CD8-positive, alpha-beta T cell (primary cell): ENCODE measurements at regions of chr10 and their contacts with region 1.

Region 1: DNA sequence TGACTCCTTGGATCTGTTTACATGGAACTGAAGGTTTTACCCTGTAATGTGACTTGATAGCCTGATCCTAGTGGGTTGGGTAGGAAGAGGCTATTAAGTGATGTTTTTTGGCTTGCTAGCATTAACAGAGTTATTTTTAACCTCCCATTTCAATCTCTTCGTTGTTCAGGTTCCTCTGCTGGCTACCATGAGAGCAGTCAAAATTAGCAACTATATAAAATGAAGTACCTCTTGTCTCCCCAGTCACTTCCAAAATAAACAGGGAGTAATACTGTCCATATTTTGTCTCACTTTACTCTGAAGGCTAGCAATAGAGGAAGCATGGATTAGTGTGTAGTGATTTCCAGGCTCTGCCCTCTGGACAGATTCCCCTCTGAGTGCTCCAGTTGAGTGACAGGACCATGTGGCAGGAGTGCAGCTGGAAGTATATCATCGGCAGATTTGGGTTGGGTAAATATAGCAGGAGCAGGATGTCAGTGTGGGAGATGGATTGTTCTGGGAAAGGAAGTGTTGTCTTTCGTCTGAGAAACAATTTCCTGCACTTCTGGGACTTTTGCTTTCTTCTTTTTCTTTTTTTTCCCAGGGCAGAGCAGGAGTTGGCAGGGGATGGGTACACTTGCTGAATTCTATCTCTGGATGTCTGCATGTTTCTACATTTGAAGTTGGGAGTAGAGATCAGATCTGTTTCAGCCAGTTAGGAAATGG is 35.2 kb downstream of the GBF1 start:
- DNase-seq: no peak
- ATAC-seq: no peak
- H3K4me3 ChIP-seq: no peak overlapping the region
- H3K4me3 Mint-ChIP-seq: peak overlapping the region; percentile 2
- H3K27ac ChIP-seq: no peak overlapping the region
- H3K27ac Mint-ChIP-seq: peak overlapping the region; percentile 56
- H3K4me1 ChIP-seq: peaks cover 23% of the 10 kb centered on the region
- H3K4me1 Mint-ChIP-seq: peaks cover 54% of the 10 kb centered on the region
- H3K27me3 ChIP-seq: no peaks in the 10 kb centered on the region
- H3K27me3 Mint-ChIP-seq: no peaks in the 10 kb centered on the region
- CTCF ChIP-seq: no peak

Region 2: DNA sequence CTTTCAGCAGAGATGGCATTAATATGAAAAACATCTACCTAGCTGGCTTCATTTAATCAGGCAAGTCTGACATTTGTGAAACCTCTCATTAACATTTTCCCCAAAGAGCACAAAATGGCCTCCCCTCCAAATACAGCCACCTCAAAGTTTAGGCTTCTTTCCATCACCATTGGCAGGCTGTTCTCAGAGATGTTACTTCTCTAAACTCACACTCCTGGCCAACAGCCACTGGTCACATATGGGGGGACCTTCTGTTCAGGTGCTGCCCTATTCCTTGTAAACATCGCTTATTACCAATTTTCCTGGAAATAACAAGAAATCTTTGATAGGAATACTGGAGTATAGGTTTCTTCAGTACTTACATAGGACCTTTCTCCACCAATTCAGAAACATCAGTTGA is 34.3 kb after region 1 on chr10:
- CTCF ChIA-PET with region 1: no interaction called
- POLR2A ChIA-PET with region 1: no interaction called
- intact Hi-C with region 1: loop called in 1 of 2 experiments (anchors 5 kb)
- DNase-seq: no peak
- ATAC-seq: no peak
- H3K4me3 ChIP-seq: no peak overlapping the region
- H3K4me3 Mint-ChIP-seq: no peak overlapping the region
- H3K27ac ChIP-seq: no peak overlapping the region
- H3K27ac Mint-ChIP-seq: no peak overlapping the region
- H3K4me1 ChIP-seq: no peaks in the 10 kb centered on the region
- H3K4me1 Mint-ChIP-seq: peaks cover 29% of the 10 kb centered on the region
- H3K27me3 ChIP-seq: no peaks in the 10 kb centered on the region
- H3K27me3 Mint-ChIP-seq: no peaks in the 10 kb centered on the region
- CTCF ChIP-seq: no peak

Region 3: DNA sequence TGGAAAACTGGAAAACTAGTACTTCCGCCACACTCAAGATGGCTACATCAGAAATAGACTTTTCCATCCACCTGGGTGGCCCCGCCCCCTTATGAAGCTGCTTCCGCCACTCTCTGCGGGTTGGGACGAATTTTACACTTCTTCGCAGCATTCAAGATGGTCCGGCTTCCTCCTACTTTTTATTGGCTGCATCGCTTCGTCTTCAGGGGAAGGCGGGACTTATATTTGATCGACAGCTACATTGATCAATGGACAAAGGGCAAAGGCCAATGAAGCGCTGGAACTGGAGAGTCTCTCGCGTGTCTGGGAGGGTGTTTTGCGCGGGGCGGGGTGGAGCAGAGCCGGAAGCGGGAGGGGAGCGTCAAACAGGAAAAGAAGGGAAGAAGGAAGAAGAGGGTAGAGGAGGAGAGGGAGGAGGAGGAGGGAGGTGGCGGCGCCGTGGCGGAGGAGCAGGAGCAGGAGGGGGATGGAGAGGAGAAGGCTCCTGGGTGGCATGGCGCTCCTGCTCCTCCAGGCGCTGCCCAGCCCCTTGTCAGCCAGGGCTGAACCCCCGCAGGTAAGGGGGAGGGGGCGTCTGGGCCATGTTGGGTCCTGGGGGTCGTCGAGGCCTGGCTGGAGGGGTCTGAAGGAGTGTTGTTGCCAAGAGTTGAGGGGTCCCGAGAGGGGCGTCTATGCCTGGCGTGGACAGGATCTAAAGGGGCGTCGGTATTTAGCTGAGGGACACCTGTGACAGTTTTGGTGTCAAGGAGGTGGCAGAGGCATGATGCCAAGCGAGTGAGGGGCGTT is 463.2 kb after region 1 on chr10 and contains the start of gene WBP1L:
- CTCF ChIA-PET with region 1: no interaction called
- POLR2A ChIA-PET with region 1: no interaction called
- intact Hi-C with region 1: no loop called
- DNase-seq: peak; percentile 90 to 99 (median 95)
- ATAC-seq: peak; percentile 96
- H3K4me3 ChIP-seq: peak within 1 kb of the TSS; percentile 87 to 99
- H3K4me3 Mint-ChIP-seq: peak within 1 kb of the TSS; percentile 92
- H3K27ac ChIP-seq: peak within 1 kb of the TSS; percentile 64 to 91
- H3K27ac Mint-ChIP-seq: peak within 1 kb of the TSS; percentile 90
- H3K4me1 ChIP-seq: peaks cover 34% of the 10 kb centered on the region
- H3K4me1 Mint-ChIP-seq: peaks cover 50% of the 10 kb centered on the region
- H3K27me3 ChIP-seq: no peaks in the 10 kb centered on the region
- H3K27me3 Mint-ChIP-seq: no peaks in the 10 kb centered on the region
- CTCF ChIP-seq: no peak
- total RNA-seq, gene WBP1L: 5.5 to 5.9 TPM